ENCODE measurements at regions of chr2 and their contacts with region 1.

Region 1: GRCh38 chr2:70340921-70341765 is 39.3 kb upstream of the FAM136A start:
- DNase-seq: no peak
- H3K4me3 ChIP-seq: no peak overlapping the region
- H3K27ac ChIP-seq: no peak overlapping the region
- H3K4me1 ChIP-seq: no peaks in the 10 kb centered on the region
- H3K27me3 ChIP-seq: peaks cover 47% of the 10 kb centered on the region
- CTCF ChIP-seq: peak; percentile 82

Region 2: DNA sequence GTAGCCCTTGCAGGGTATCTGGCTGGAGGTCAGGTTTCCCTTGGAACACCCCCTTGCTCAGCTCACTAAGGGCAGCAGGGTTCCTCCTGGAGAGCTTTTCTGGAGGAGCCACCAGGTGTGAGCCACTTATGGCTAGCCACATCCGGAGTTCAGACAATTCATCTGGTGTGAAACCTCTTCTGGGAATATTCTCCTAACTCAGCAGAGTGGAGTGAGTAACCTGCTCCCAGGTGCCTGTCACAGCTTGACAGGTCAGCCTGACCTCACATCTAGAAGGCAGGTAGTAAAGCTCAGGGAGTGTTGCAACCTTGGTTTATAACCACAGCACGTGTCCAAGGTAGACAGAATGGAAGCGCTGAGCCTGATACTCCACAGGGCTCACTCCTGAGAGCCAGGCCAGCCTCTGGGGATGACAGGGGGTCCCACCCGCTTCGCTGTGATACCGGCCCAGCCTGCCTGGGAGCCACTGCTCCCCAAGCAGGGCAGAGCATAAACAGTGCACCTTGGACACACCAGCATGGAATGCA is 275.1 kb after region 1 on chr2:
- intact Hi-C with region 1: loop called (anchors 5 kb)
- DNase-seq: no peak
- H3K4me3 ChIP-seq: no peak overlapping the region
- H3K27ac ChIP-seq: no peak overlapping the region
- H3K4me1 ChIP-seq: no peaks in the 10 kb centered on the region
- H3K27me3 ChIP-seq: peaks cover 36% of the 10 kb centered on the region
- CTCF ChIP-seq: no peak